Activated CD8-positive, alpha-beta memory T cell treated with anti-CD3 and anti-CD28 coated beads, Interleukin-2, amount 10 ng/mL, durations not matched to agents 7 days and 5 days (primary cell): ENCODE measurements at regions of chr7 and their contacts with region 1.

Region 1: DNA sequence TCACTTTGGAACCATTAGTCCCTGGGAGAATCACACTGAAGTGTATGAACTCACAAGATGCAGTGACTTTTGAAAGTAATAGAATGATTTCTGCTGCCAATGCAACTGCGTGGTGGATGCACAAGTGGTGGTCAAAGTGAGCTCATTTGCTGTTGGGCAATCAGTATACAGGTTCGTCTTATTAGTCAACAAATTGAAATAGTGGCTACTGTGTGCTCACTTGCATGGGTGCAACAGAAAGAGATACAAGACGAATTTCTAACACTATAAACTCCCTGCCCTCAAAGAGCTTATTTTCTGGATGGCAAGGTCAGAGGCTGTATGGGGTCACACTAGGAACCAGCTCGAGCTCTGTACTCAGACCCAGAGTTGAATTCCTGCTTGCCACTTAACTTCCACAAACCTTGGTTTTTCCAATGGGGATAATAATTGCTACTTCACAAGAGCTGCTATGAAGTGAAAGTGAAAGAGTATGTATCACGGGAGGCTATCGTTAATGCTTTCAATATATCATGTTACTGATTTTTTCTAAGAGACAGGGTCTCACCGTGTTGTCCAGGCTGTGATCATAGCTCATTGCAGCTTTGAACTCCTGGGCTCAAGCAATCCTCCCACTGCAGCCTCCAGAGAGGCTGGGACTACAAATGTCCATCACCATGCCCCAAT is 8.3 kb upstream of the BCL7B start:
- DNase-seq: no peak
- ATAC-seq: peak; percentile 66
- H3K4me3 Mint-ChIP-seq: peak overlapping the region; percentile 72
- H3K27ac Mint-ChIP-seq: peak overlapping the region; percentile 84
- H3K4me1 Mint-ChIP-seq: peaks cover 29% of the 10 kb centered on the region
- H3K27me3 Mint-ChIP-seq: no peaks in the 10 kb centered on the region

Region 2: DNA sequence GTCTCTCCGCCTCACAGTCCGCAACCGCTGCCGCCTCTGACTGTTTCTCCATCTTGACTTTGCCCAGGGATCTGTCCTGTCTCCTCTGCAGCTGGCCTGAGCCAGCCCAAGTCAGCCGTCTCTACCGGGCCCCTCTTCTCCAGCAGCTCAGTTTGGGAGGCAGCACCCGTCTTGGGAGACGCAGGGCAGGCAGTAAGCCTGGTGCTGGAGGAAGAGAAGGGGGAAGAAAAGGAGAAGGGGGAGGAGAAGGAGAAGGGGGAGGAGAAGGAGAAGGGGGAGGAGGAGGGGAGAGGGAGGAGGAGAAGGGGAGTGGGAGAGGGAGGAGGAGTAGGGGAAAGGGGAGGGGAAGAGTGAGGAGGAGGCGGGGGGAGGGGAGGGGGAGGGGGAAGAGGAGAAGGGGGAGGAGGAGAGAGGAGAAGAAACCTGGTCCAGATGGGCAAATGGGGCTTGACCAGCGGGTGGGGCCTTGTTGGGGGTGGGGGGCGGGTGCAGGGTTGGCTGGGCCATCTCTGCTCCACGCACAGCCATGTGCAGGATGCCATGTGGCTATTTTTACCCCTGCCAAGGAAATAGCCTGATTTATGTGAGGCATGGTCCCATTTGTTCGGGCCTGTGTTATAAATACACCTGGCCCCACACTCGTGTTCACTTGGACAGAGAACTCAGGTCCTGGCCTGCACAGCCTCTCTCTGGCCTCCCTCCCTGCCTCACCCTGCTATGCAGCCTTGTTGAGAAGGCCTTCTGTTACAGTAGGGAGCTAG is 168.1 kb before region 1 on chr7:
- CTCF ChIA-PET with region 1: no interaction called
- DNase-seq: no peak
- ATAC-seq: no peak
- H3K4me3 Mint-ChIP-seq: no peak overlapping the region
- H3K27ac Mint-ChIP-seq: no peak overlapping the region
- H3K4me1 Mint-ChIP-seq: peaks cover 6% of the 10 kb centered on the region
- H3K27me3 Mint-ChIP-seq: no peaks in the 10 kb centered on the region

Region 3: DNA sequence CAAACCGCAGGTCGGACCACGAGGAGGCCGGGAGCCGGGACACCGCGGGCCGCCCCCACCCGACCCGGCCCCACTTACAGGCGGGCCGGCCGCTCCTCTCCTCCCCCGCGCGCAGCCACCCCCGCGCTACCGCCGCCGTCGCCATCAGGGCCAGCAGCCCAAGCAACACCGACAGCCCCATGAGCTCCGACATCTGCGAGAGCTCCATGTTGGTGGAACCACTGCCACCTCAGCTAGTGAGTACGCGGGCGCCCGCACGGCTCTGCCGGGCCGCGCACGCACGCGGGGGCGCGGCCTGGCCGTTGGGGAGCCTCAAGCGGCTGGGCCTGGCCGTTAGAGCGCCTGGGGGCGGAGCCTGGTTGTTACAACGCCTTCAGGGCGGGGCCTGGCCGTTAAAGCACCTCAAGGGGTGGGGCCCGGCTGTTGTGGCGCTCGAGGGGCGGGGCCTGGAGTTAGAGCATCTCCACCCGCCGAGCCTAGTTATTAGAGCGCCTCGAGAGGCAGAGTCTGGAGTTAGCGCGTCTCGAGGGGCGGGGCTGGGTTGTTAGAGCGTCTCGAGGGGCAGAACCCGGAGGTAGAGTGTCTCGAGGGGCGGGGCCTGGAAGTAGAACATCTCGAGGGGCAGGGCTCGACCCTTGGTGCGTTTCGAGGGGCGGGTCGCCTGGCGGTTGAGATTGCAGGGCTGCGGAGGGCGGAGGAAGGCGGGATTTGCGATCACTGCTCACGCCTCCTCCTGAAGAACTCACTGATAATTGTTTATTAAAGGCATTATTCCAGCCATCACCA is 12.7 kb after region 1 on chr7 and contains the start of gene TBL2:
- CTCF ChIA-PET with region 1: interaction called, 17 read pairs
- DNase-seq: peak; percentile 99
- ATAC-seq: peak; percentile 93
- H3K4me3 Mint-ChIP-seq: peak within 1 kb of the TSS; percentile 82
- H3K27ac Mint-ChIP-seq: peak within 1 kb of the TSS; percentile 95
- H3K4me1 Mint-ChIP-seq: peaks cover 33% of the 10 kb centered on the region
- H3K27me3 Mint-ChIP-seq: no peaks in the 10 kb centered on the region
- total RNA-seq, gene TBL2: 23.3 to 27.2 TPM

Region 4: DNA sequence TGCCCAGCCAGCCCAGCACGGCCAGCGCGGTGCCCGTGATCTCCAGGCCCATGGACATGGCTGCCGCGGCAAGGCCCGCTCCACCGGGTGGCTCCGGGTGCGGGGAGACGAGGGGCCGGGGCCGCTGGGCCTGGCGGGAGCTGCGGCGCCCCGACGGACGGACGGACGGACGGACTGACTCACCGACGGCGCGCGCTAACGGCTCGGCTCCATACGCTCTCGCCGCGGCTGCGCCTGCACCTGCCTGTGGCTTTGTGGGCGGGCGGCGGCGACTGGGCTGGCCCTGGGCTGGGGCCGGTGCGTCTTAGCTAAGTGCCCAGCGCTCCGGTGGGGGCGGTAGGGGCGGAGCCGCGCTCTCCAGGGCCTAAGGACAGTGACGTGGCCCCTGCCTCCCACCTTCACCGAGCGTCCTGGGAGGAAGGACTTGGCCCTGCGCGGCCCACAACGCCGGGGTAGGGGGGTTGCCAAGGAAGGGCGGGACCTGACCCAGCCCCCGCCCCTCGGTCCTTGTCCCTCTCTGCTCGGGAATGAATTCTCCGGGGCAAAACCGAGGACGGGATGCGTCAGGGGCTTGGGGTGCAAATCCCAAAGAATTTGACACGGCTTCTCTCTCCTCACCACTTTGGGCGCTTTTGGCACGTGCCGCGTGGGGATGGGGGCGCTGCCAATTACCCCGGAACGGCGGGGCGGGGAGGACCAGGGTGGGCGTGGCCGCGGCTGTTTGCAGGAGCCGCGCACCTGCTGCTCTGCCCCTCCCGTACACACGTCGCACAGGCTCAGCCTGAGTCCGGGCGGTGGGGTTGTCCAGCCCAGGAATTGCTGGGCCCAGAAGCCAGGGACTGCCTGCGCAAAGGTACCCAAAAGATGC is 204.4 kb after region 1 on chr7 and contains the start of gene CLDN3:
- CTCF ChIA-PET with region 1: no interaction called
- DNase-seq: no peak
- ATAC-seq: no peak
- H3K4me3 Mint-ChIP-seq: no peak within 1 kb of the TSS
- H3K27ac Mint-ChIP-seq: no peak within 1 kb of the TSS
- H3K4me1 Mint-ChIP-seq: peaks cover 8% of the 10 kb centered on the region
- H3K27me3 Mint-ChIP-seq: peaks cover 47% of the 10 kb centered on the region
- total RNA-seq, gene CLDN3: not detected